Activated CD4-positive, alpha-beta T cell treated with anti-CD3 and anti-CD28 coated beads for 36 hours (primary cell): ENCODE measurements at regions of chr11 and their contacts with region 1.

Region 1: GRCh38 chr11:117828611-117829368 is 4.2 kb upstream of the FXYD2 start:
- DNase-seq: peak; percentile 91
- ATAC-seq: peak; percentile 96
- H3K4me3 Mint-ChIP-seq: no peak overlapping the region
- H3K27ac Mint-ChIP-seq: peak overlapping the region; percentile 78
- H3K4me1 Mint-ChIP-seq: peaks cover 41% of the 10 kb centered on the region
- H3K27me3 Mint-ChIP-seq: no peaks in the 10 kb centered on the region

Region 2: GRCh38 chr11:117843666-117844484 is 15.1 kb after region 1 on chr11:
- CTCF ChIA-PET with region 1: interaction called, 34 read pairs
- POLR2A ChIA-PET with region 1: no interaction called
- intact Hi-C with region 1: no loop called
- DNase-seq: peak; percentile 91
- ATAC-seq: peak; percentile 89
- H3K4me3 Mint-ChIP-seq: no peak overlapping the region
- H3K27ac Mint-ChIP-seq: no peak overlapping the region
- H3K4me1 Mint-ChIP-seq: no peaks in the 10 kb centered on the region
- H3K27me3 Mint-ChIP-seq: no peaks in the 10 kb centered on the region